GM12878 (cell line): ENCODE measurements at regions of chr18 and their contacts with region 1.

Region 1: DNA sequence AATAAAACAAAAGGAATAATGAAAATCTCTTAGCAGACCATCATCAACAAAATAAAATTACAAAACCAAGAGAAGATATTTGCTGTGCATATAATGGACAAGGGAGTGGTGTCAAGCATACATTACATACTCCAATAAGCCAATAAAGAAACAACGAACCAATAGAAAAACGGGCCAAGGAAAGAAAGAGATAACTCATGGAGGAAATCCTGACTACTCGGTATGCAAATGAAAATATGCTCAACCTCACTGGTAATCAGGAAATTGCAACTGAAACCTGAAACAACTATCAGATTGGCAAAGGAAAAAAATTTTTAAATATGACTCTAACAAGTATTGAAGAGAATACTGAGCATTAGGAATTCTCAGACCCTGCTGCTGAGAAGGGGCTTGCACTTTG is 84.7 kb downstream of the BCL2 start:
- DNase-seq: no peak
- ATAC-seq: peak; percentile 28
- H3K4me3 ChIP-seq: peak overlapping the region; percentile 27; the same call in 1 of the 2 replicates
- H3K27ac ChIP-seq: peak overlapping the region; percentile 70; the same call in 1 of the 2 replicates
- H3K4me1 ChIP-seq: peaks cover 17% of the 10 kb centered on the region
- H3K27me3 ChIP-seq: no peaks in the 10 kb centered on the region
- CTCF ChIP-seq: no peak
- EP300 ChIP-seq: no peak
- POLR2A ChIP-seq: no peak
- RAD21 ChIP-seq: no peak

Region 2: DNA sequence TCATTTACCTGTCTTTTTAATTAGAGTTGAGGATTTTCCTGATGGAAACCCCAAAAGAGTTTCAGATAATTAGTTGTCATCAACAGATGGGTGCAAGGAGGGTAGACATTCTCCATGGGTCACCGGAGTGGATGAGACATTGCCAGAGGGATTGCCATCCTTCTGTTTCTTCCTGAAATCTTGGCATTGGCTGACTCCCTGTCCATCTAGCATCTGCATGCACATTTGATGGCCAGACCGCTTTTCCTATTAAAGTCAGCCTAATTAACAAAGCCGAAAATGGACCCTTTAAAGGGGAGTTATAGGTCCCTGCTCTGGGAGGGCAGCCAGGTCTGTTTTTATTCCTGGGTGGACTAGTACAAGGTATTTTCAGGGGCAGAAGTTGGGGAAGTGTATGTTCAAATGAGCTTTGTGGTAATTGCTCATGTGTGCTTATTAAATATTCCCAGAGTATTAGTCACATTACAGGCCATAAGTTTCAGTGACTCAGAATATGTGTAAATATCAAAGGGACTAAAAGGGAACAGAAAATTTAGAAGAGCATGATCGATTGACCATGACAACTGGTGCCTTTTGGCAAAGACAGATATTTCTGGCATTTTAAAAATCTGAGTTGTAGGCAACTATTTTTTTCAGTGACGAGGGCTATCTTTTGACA is 309.7 kb before region 1 on chr18:
- CTCF ChIA-PET with region 1: no interaction called
- POLR2A ChIA-PET with region 1: no interaction called
- RAD21 ChIA-PET with region 1: no interaction called
- SMC1A ChIA-PET with region 1: no interaction called
- in situ Hi-C with region 1: no loop called
- intact Hi-C with region 1: no loop called
- DNase-seq: no peak
- ATAC-seq: peak; percentile 69
- H3K4me3 ChIP-seq: no peak overlapping the region
- H3K27ac ChIP-seq: no peak overlapping the region
- H3K4me1 ChIP-seq: peaks cover 4% of the 10 kb centered on the region
- H3K27me3 ChIP-seq: no peaks in the 10 kb centered on the region
- CTCF ChIP-seq: no peak
- EP300 ChIP-seq: peak in 1 of 2 experiments; percentile 53; a peak in 1 of 4 replicates
- POLR2A ChIP-seq: no peak
- RAD21 ChIP-seq: no peak

Region 3: DNA sequence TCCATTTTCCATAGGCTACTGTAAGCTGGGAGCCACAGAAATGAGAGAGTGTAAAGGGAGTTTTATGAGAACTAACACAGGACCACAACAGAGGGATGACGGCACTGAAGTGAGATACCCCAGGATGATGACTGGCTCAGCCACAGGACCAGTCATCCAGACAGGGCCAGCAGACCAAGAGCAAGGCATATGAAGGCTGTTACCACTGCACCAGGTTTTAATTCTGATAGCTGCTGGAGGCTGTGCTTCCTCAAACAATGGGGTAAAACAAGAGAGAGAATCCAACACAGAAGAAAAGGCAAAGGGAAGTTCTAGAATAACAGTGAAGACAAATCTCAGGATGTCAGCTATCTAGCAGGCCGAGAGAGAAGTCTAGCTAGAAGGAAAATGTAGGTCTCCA is 10.2 kb before region 1 on chr18:
- CTCF ChIA-PET with region 1: interaction called, 10 read pairs
- POLR2A ChIA-PET with region 1: interaction called, 3 read pairs
- RAD21 ChIA-PET with region 1: no interaction called
- SMC1A ChIA-PET with region 1: interaction called, 5 read pairs
- in situ Hi-C with region 1: no loop called
- intact Hi-C with region 1: no loop called
- DNase-seq: no peak
- ATAC-seq: peak; percentile 81
- H3K4me3 ChIP-seq: no peak overlapping the region
- H3K27ac ChIP-seq: peak overlapping the region; percentile 45
- H3K4me1 ChIP-seq: peaks cover 28% of the 10 kb centered on the region
- H3K27me3 ChIP-seq: no peaks in the 10 kb centered on the region
- CTCF ChIP-seq: no peak
- EP300 ChIP-seq: no peak
- POLR2A ChIP-seq: no peak
- RAD21 ChIP-seq: no peak